AG04449 (cell line): ENCODE measurements at regions of chr15 and their contacts with region 1.

Region 1: GRCh38 chr15:40338041-40338657 is 2.6 kb downstream of the CCDC9B start:
- DNase-seq: no peak
- H3K4me3 ChIP-seq: peak overlapping the region; percentile 48
- CTCF ChIP-seq: peak; percentile 84

Region 2: DNA sequence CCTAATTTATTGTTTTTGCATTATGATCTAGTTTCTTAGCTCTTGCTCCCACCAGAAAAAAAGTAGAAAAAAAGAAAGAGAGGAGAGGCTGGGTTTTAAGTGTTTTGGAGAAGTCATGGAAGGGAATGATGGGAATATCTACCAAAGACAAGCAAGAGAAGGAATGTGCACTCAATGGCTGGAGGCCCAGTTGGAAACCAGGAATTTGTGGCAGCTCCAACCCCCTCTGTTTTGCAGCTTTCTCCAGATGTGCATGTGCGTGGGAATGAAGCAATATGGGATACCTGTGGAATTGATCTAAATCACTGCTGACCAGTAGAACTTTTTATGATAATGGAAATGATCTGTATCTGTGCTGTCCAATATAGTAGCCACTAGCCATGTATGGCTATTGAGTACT is 377.1 kb before region 1 on chr15:
- CTCF ChIA-PET with region 1: no interaction called
- POLR2A ChIA-PET with region 1: no interaction called
- DNase-seq: no peak
- H3K4me3 ChIP-seq: no peak overlapping the region
- CTCF ChIP-seq: no peak

Region 3: GRCh38 chr15:40357723-40358470 is 19.7 kb after region 1 on chr15 and contains the start of gene DISP2:
- CTCF ChIA-PET with region 1: interaction called, 166 read pairs
- POLR2A ChIA-PET with region 1: interaction called, 5 read pairs
- DNase-seq: no peak
- H3K4me3 ChIP-seq: peak within 1 kb of the TSS; percentile 61
- CTCF ChIP-seq: no peak

Region 4: GRCh38 chr15:40382580-40383456 is 44.7 kb after region 1 on chr15 and contains the start of gene KNSTRN:
- CTCF ChIA-PET with region 1: interaction called, 18 read pairs
- POLR2A ChIA-PET with region 1: interaction called, 3 read pairs
- DNase-seq: peak; percentile 67
- H3K4me3 ChIP-seq: peak within 1 kb of the TSS; percentile 89
- CTCF ChIP-seq: no peak